Activated B cell treated with CpG ODN at 0.5 μM for 24 hours (primary cell): ENCODE measurements at regions of chr11 and their contacts with region 1.

Region 1: DNA sequence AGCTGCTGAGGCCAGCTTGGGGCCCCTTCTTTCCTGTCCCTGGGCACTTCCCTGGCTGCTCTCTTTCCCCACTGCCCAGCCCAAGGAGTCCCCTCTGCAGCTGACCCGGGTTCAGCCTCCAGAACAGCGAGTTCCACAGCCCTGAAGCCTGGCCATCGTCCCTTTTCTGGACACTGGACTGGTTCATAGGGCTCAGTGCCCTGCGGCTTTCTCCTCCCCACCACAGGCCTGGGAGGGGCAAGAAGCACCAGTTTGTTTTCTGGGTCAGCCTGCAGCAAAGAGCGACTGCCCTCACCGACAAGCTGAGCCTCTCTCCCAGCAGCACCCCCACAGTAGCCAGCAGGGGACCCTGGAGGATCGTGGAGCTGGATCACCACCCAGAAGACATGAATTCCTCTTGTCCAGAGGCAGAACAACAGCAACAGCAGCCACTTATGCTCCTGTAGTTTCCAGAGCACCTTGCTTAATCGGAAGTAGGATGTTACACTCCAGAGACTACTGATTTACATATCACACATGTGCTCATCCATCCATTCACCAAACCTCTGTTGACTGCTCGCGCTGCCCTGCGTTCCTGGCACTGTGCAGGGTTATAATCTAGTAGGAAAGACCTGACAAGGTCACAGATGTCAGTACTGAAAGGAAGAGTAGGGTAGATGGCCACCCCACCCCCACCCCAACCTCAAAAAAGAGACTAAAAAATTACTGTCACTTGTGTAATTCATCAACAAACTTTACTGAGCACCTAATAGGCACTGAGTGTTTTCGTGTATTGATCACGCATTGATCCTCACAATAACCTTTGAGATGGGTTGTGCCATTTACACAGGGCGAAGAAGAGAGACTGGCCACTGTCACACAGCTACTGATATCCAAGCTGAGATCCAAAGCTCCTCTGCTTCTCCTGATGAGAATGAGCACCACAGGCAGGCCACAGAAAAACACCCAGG is 13.0 kb upstream of the CXCR5 start:
- DNase-seq: peak; percentile 54
- ATAC-seq: peak; percentile 56
- H3K4me3 Mint-ChIP-seq: peak overlapping the region; percentile 83
- H3K27ac Mint-ChIP-seq: peak overlapping the region; percentile 99
- H3K4me1 Mint-ChIP-seq: peaks cover 68% of the 10 kb centered on the region
- H3K27me3 Mint-ChIP-seq: no peaks in the 10 kb centered on the region
- CTCF ChIP-seq: no peak

Region 2: DNA sequence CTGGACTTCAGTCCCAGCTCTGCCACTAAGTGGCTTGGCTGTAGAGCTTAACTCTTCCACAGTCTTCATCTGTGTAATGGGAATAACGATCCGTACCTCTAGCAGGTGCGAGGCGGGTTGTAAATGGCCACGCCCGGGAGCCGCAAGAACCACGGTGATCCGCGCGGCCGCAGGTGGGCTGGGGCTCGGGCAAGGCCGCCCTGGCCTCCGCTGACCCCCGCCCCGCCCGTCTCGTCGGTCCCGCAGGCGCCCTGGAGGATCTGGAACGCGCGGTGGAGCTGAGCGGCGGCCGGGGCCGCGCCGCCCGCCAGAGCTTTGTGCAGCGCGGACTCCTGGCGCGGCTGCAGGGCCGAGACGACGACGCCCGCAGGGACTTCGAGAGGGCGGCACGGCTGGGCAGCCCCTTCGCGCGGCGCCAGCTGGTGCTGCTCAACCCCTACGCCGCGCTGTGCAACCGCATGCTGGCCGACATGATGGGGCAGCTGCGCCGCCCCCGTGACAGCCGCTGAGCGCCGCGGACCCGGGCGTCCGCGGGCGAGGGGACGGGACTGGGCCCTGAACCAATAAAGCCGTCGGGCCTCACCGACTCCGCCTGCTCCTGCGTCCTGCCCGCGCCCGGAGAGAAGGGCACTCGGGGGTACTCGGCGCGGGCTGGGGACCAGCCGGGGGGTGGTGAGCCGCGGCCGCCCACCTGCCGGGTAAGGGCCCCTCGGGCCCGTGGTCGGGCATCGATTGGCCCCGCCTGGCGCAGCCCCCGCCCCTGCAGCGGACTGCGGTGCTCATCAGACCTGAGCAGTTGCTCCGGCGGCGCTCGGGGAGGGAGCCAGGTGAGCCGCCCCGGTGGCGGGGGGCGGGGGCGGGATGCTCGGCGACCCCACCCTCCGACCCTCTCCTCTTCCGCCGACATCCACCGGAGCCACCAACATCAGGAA is 340.0 kb before region 1 on chr11 and contains the start of gene TMEM25:
- CTCF ChIA-PET with region 1: no interaction called
- POLR2A ChIA-PET with region 1: no interaction called
- intact Hi-C with region 1: no loop called
- DNase-seq: peak; percentile 71
- ATAC-seq: peak; percentile 90
- H3K4me3 Mint-ChIP-seq: peak within 1 kb of the TSS; percentile 89
- H3K27ac Mint-ChIP-seq: peak within 1 kb of the TSS; percentile 35
- H3K4me1 Mint-ChIP-seq: peaks cover 18% of the 10 kb centered on the region
- H3K27me3 Mint-ChIP-seq: no peaks in the 10 kb centered on the region
- CTCF ChIP-seq: no peak
- total RNA-seq, gene TMEM25: 9.4 and 12.5 TPM in 2 replicates

Region 3: GRCh38 chr11:118813551-118813950 is 57.1 kb before region 1 on chr11:
- CTCF ChIA-PET with region 1: no interaction called
- POLR2A ChIA-PET with region 1: interaction called, 182 read pairs
- intact Hi-C with region 1: no loop called
- DNase-seq: no peak
- ATAC-seq: peak; percentile 18
- H3K4me3 Mint-ChIP-seq: peak overlapping the region; percentile 25
- H3K27ac Mint-ChIP-seq: peak overlapping the region; percentile 44
- H3K4me1 Mint-ChIP-seq: peaks cover 66% of the 10 kb centered on the region
- H3K27me3 Mint-ChIP-seq: no peaks in the 10 kb centered on the region
- CTCF ChIP-seq: no peak

Region 4: DNA sequence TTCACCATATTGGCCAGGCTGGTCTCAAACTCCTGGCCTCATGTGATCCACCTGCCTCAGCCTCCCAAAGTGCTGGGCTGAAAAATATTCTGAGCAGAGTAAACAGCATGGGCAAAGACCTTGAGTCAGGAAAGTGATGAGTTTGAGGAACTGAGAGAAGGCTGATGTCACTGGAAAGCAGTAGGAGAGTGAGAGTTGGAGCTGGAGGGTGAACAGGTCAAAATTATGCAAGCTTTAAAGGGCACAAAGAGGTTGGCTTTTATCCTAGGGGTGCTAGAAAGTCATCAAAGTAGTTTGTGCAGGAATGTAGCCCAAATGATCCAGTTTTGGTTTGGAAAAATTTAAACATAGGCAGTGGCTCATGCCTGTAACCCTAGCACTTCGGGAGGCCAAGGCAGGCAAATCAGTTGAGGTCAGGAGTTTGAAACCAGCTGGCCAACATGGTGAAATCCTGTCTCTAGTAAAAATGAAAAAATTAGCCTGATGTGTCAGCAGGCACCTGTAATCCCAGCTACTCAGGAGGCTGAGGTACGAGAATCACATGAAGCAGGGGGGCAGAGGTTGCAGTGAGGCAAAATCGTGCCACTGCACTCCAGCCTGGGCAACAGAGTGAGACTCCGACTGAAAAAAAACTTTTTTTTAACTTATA is 31.6 kb before region 1 on chr11:
- CTCF ChIA-PET with region 1: no interaction called
- POLR2A ChIA-PET with region 1: interaction called, 29 read pairs
- intact Hi-C with region 1: loop called (anchors 1 kb)
- DNase-seq: no peak
- ATAC-seq: peak; percentile 78
- H3K4me3 Mint-ChIP-seq: peak overlapping the region; percentile 47
- H3K27ac Mint-ChIP-seq: peak overlapping the region; percentile 85
- H3K4me1 Mint-ChIP-seq: peaks cover 61% of the 10 kb centered on the region
- H3K27me3 Mint-ChIP-seq: no peaks in the 10 kb centered on the region
- CTCF ChIP-seq: no peak

Region 5: DNA sequence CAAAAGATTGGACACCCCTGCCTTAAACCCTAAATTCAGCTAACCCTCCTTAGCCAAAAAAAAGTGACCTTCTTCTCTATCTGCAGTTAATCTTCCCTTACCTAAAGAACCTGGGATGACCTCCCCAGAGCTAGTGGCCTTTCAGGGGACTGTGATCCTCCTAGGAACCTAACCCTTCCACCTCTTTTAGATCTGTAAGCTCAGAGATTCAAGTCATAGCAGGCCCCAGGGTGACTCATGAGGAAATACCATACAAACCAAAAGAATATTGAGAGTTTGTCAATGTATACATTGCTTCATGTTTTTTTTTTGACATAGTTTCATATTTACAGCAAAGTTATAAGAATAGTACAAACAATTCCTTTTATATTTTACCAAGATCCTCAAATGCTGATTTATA is 25.3 kb before region 1 on chr11:
- CTCF ChIA-PET with region 1: no interaction called
- POLR2A ChIA-PET with region 1: interaction called, 16 read pairs
- intact Hi-C with region 1: no loop called
- DNase-seq: no peak
- ATAC-seq: no peak
- H3K4me3 Mint-ChIP-seq: no peak overlapping the region
- H3K27ac Mint-ChIP-seq: peak overlapping the region; percentile 46
- H3K4me1 Mint-ChIP-seq: peaks cover 58% of the 10 kb centered on the region
- H3K27me3 Mint-ChIP-seq: no peaks in the 10 kb centered on the region
- CTCF ChIP-seq: no peak

Region 6: GRCh38 chr11:118851970-118852369 is 18.7 kb before region 1 on chr11:
- CTCF ChIA-PET with region 1: interaction called, 4 read pairs
- POLR2A ChIA-PET with region 1: interaction called, 45 read pairs
- intact Hi-C with region 1: loop called (anchors 1 kb)
- DNase-seq: no peak
- ATAC-seq: peak; percentile 87
- H3K4me3 Mint-ChIP-seq: peak overlapping the region; percentile 55
- H3K27ac Mint-ChIP-seq: peak overlapping the region; percentile 64
- H3K4me1 Mint-ChIP-seq: peaks cover 42% of the 10 kb centered on the region
- H3K27me3 Mint-ChIP-seq: no peaks in the 10 kb centered on the region
- CTCF ChIP-seq: no peak

Region 7: GRCh38 chr11:118859973-118860372 is 10.7 kb before region 1 on chr11:
- CTCF ChIA-PET with region 1: interaction called, 6 read pairs
- POLR2A ChIA-PET with region 1: interaction called, 45 read pairs
- intact Hi-C with region 1: loop called (anchors 1 kb)
- DNase-seq: no peak
- ATAC-seq: no peak
- H3K4me3 Mint-ChIP-seq: no peak overlapping the region
- H3K27ac Mint-ChIP-seq: peak overlapping the region; percentile 4
- H3K4me1 Mint-ChIP-seq: peaks cover 37% of the 10 kb centered on the region
- H3K27me3 Mint-ChIP-seq: no peaks in the 10 kb centered on the region
- CTCF ChIP-seq: no peak

Region 8: GRCh38 chr11:118895142-118896039 is 24.7 kb after region 1 on chr11:
- CTCF ChIA-PET with region 1: interaction called, 14 read pairs
- POLR2A ChIA-PET with region 1: interaction called, 36 read pairs
- intact Hi-C with region 1: no loop called
- DNase-seq: peak; percentile 62
- ATAC-seq: peak; percentile 70
- H3K4me3 Mint-ChIP-seq: peak overlapping the region; percentile 80
- H3K27ac Mint-ChIP-seq: peak overlapping the region; percentile 98
- H3K4me1 Mint-ChIP-seq: peaks cover 85% of the 10 kb centered on the region
- H3K27me3 Mint-ChIP-seq: no peaks in the 10 kb centered on the region
- CTCF ChIP-seq: no peak

Region 9: DNA sequence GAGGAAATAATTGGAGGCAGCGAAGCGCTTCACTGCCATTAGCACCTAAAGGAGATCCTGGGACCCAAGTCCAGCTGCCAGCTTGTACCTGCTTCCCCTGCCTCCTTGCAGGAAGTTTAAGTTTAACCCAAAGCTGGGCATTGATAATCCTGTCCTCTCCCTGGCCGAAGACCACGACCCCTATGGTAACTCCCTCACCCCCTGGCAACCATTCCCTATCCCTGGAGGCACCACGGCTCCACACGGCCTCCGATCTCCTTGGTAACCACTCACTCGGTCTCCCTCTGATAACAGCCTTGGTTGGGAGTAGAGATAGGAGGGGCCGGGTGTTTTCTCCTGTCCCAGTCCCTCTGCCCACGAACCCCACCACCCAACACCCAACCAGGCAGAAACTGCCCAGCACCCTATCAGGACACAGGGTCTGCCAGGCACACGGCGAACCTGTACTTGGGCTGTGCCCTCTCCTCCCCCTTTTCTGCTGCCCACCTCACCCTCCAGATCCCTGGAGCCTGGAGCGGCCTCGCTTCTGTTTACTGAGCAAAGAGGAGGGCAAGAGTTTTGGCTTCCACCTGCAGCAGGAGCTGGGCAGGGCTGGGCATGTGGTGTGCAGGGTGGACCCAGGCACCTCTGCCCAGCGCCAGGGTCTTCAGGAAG is 315.4 kb after region 1 on chr11:
- CTCF ChIA-PET with region 1: no interaction called
- POLR2A ChIA-PET with region 1: no interaction called
- intact Hi-C with region 1: no loop called
- DNase-seq: no peak
- ATAC-seq: no peak
- H3K4me3 Mint-ChIP-seq: no peak overlapping the region
- H3K27ac Mint-ChIP-seq: no peak overlapping the region
- H3K4me1 Mint-ChIP-seq: peaks cover 8% of the 10 kb centered on the region
- H3K27me3 Mint-ChIP-seq: peaks cover 9% of the 10 kb centered on the region
- CTCF ChIP-seq: no peak

Region 10: GRCh38 chr11:120601536-120601935 is 1730.9 kb after region 1 on chr11:
- CTCF ChIA-PET with region 1: no interaction called
- POLR2A ChIA-PET with region 1: no interaction called
- intact Hi-C with region 1: no loop called
- DNase-seq: no peak
- ATAC-seq: no peak
- H3K4me3 Mint-ChIP-seq: no peak overlapping the region
- H3K27ac Mint-ChIP-seq: no peak overlapping the region
- H3K4me1 Mint-ChIP-seq: no peaks in the 10 kb centered on the region
- H3K27me3 Mint-ChIP-seq: peaks cover 12% of the 10 kb centered on the region
- CTCF ChIP-seq: no peak